T-cell (primary cell): ENCODE measurements at regions of chr15 and their contacts with region 1.

Region 1: GRCh38 chr15:45402162-45402954 is 24.0 kb upstream of the GATM start:
- DNase-seq: peak; percentile 92 to 98 (median 96)
- ATAC-seq: peak; percentile 92 to 96 (median 94)
- H3K4me3 ChIP-seq: peak overlapping the region; percentile 90 to 96
- H3K4me3 Mint-ChIP-seq: peak overlapping the region; percentile 87 to 96 (median 95)
- H3K27ac ChIP-seq: peak overlapping the region; percentile 93
- H3K27ac Mint-ChIP-seq: peak overlapping the region; percentile 97 to 100
- H3K4me1 ChIP-seq: peaks cover 16 to 17% of the 10 kb centered on the region in 2 experiments
- H3K4me1 Mint-ChIP-seq: peaks cover 29 to 47% (median 37%) of the 10 kb centered on the region in 3 donors
- H3K27me3 ChIP-seq: no peaks in the 10 kb centered on the region
- H3K27me3 Mint-ChIP-seq: no peaks in the 10 kb centered on the region

Region 2: GRCh38 chr15:44956388-44956787 is 446.0 kb before region 1 on chr15 and contains the start of gene TERB2:
- CTCF ChIA-PET with region 1: no interaction called
- POLR2A ChIA-PET with region 1: no interaction called
- DNase-seq: no peak
- ATAC-seq: no peak
- H3K4me3 ChIP-seq: no peak within 1 kb of the TSS
- H3K4me3 Mint-ChIP-seq: no peak within 1 kb of the TSS
- H3K27ac ChIP-seq: no peak within 1 kb of the TSS
- H3K27ac Mint-ChIP-seq: no peak within 1 kb of the TSS
- H3K4me1 ChIP-seq: no peaks in the 10 kb centered on the region
- H3K4me1 Mint-ChIP-seq: no peaks in the 10 kb centered on the region
- H3K27me3 ChIP-seq: peaks cover 0 to 7% of the 10 kb centered on the region in 2 experiments
- H3K27me3 Mint-ChIP-seq: peaks cover 3 to 10% of the 10 kb centered on the region in 2 donors
- total RNA-seq, gene TERB2: not detected

Region 3: DNA sequence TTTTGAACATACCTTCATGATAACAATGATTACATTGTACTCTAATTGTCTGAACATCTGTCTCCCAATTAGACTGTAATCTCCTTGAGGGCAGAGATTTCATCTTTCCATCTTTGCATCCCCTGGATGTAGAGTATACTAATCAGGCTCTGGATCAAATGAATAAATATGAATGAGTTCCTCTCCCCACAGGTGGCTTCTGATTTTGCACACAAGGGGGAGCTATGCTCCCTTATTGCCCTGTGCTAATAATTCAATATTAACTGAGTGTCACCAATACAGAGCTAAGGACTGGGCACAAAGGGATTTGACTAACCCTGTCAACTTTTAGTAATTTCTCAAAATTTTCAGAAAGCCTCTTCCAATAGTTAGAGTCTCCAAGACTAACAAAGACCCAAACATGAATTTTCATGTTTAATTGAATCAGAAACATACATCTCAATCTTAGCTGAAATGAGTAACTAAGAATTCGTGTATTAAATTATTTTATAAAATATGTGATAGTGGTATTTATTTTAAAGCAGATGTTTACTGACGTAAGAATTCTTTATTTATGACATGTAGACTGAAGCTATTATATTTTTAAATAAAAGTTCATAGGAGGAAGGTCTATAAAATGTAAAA is 275.7 kb before region 1 on chr15:
- CTCF ChIA-PET with region 1: interaction called in 1 of 2 experiments, 16 read pairs
- POLR2A ChIA-PET with region 1: interaction called in 1 of 2 experiments, 3 read pairs
- DNase-seq: peak in 19 of 35 experiments; percentile 23 to 69 (median 41)
- ATAC-seq: peak; percentile 38 to 79 (median 58)
- H3K4me3 ChIP-seq: no peak overlapping the region
- H3K4me3 Mint-ChIP-seq: no peak overlapping the region
- H3K27ac ChIP-seq: no peak overlapping the region
- H3K27ac Mint-ChIP-seq: no peak overlapping the region
- H3K4me1 ChIP-seq: peaks cover 0 to 14% of the 10 kb centered on the region in 2 experiments
- H3K4me1 Mint-ChIP-seq: peaks cover 0 to 11% (median 8%) of the 10 kb centered on the region in 3 donors
- H3K27me3 ChIP-seq: peaks cover 10 to 44% of the 10 kb centered on the region in 2 experiments
- H3K27me3 Mint-ChIP-seq: peaks cover 43 to 68% of the 10 kb centered on the region in 2 donors

Region 4: GRCh38 chr15:45198337-45199135 is 203.8 kb before region 1 on chr15:
- CTCF ChIA-PET with region 1: interaction called in 1 of 2 experiments, 5 read pairs
- POLR2A ChIA-PET with region 1: interaction called, 8 to 10 read pairs
- DNase-seq: peak; percentile 83 to 99 (median 94)
- ATAC-seq: peak; percentile 67 to 75 (median 72)
- H3K4me3 ChIP-seq: peak overlapping the region; percentile 85 to 92
- H3K4me3 Mint-ChIP-seq: no peak overlapping the region
- H3K27ac ChIP-seq: peak overlapping the region; percentile 96
- H3K27ac Mint-ChIP-seq: no peak overlapping the region
- H3K4me1 ChIP-seq: peaks cover 2 to 31% of the 10 kb centered on the region in 2 experiments
- H3K4me1 Mint-ChIP-seq: peaks cover 0 to 17% (median 15%) of the 10 kb centered on the region in 3 donors
- H3K27me3 ChIP-seq: peaks cover 0 to 5% of the 10 kb centered on the region in 2 experiments
- H3K27me3 Mint-ChIP-seq: no peaks in the 10 kb centered on the region

Region 5: GRCh38 chr15:45333550-45333949 is 68.8 kb before region 1 on chr15:
- CTCF ChIA-PET with region 1: no interaction called
- POLR2A ChIA-PET with region 1: no interaction called
- DNase-seq: no peak
- ATAC-seq: no peak
- H3K4me3 ChIP-seq: no peak overlapping the region
- H3K4me3 Mint-ChIP-seq: no peak overlapping the region
- H3K27ac ChIP-seq: no peak overlapping the region
- H3K27ac Mint-ChIP-seq: no peak overlapping the region
- H3K4me1 ChIP-seq: no peaks in the 10 kb centered on the region
- H3K4me1 Mint-ChIP-seq: peaks cover 5 to 11% (median 7%) of the 10 kb centered on the region in 3 donors
- H3K27me3 ChIP-seq: peaks cover 0 to 5% of the 10 kb centered on the region in 2 experiments
- H3K27me3 Mint-ChIP-seq: peaks cover 7 to 20% of the 10 kb centered on the region in 2 donors

Region 6: GRCh38 chr15:45361878-45362277 is 40.5 kb before region 1 on chr15:
- CTCF ChIA-PET with region 1: no interaction called
- POLR2A ChIA-PET with region 1: no interaction called
- DNase-seq: no peak
- ATAC-seq: no peak
- H3K4me3 ChIP-seq: no peak overlapping the region
- H3K4me3 Mint-ChIP-seq: no peak overlapping the region
- H3K27ac ChIP-seq: no peak overlapping the region
- H3K27ac Mint-ChIP-seq: no peak overlapping the region
- H3K4me1 ChIP-seq: no peaks in the 10 kb centered on the region
- H3K4me1 Mint-ChIP-seq: no peaks in the 10 kb centered on the region
- H3K27me3 ChIP-seq: peaks cover 0 to 4% of the 10 kb centered on the region in 2 experiments
- H3K27me3 Mint-ChIP-seq: peaks cover 1 to 4% of the 10 kb centered on the region in 2 donors

Region 7: DNA sequence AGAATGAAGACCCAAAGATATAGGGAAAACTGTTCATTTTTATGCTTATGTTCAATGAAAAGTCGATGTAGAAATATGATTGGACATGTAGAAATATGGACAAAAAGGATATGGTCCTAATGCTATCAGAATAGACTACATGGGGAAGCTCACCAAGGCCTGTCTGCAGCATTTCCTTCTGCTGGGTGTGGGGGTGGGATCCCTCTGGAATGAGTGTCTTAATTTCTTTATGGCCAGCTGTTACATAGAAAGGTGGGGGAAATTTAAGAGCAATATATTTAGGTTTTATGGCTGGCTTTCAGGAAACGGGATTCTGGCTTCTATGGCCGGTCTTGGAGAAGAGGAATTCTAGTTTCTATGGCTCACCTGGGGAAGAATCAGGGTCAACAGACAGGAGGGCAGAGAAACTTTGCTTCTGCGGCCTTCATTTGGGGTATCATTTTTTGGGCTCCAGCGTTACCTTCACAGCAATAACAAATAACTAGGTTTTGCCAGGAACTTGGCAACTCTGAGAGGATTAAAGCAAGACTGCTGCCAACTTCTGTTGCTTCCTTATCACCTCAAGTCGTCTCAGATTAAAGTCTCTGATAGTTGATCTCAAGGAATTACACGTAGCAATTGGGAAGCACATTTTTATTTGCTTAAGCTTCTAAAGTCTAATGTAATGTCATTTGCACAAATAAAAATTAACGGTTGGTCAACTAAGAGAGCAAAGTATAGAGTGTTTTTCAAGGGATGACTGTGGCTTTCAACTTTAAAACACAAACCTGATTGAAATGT is 33.0 kb after region 1 on chr15:
- CTCF ChIA-PET with region 1: interaction called, 7 to 13 read pairs
- POLR2A ChIA-PET with region 1: interaction called in 1 of 2 experiments, 15 read pairs
- DNase-seq: no peak
- ATAC-seq: no peak
- H3K4me3 ChIP-seq: no peak overlapping the region
- H3K4me3 Mint-ChIP-seq: no peak overlapping the region
- H3K27ac ChIP-seq: no peak overlapping the region
- H3K27ac Mint-ChIP-seq: no peak overlapping the region
- H3K4me1 ChIP-seq: peaks cover 0 to 6% of the 10 kb centered on the region in 2 experiments
- H3K4me1 Mint-ChIP-seq: peaks cover 0 to 5% (median 2%) of the 10 kb centered on the region in 3 donors
- H3K27me3 ChIP-seq: peaks cover 0 to 3% of the 10 kb centered on the region in 2 experiments
- H3K27me3 Mint-ChIP-seq: peaks cover 3 to 7% of the 10 kb centered on the region in 2 donors